Sciatic nerve (tissue), 2 donors: ENCODE measurements at regions of chr4 and their contacts with region 1.

Region 1: GRCh38 chr4:120049732-120050494 is 16.7 kb downstream of the MAD2L1 start:
- DNase-seq: peak; percentile 88
- ATAC-seq: peak; percentile 96

Region 2: DNA sequence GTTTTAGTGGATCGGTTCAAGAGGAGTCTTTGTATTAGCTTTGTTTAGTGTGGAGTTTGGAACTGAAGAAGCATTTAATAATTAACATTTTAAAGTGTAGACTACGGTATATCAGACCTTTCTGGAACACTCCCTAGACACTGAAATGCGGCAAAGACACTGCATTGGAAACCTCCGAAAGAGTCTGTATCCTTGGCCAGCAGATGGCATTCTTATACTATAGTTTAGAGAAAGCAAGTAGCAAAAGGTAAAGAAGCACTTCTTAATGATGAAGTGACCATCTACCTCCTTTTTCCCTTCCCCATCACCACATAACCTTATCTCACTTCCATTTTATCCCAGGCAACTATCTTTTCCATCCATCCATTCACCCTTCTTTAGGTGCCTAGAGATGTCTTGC is 735.6 kb before region 1 on chr4:
- intact Hi-C with region 1: loop called (anchors 10 kb)
- DNase-seq: no peak
- ATAC-seq: peak; percentile 77

Region 3: DNA sequence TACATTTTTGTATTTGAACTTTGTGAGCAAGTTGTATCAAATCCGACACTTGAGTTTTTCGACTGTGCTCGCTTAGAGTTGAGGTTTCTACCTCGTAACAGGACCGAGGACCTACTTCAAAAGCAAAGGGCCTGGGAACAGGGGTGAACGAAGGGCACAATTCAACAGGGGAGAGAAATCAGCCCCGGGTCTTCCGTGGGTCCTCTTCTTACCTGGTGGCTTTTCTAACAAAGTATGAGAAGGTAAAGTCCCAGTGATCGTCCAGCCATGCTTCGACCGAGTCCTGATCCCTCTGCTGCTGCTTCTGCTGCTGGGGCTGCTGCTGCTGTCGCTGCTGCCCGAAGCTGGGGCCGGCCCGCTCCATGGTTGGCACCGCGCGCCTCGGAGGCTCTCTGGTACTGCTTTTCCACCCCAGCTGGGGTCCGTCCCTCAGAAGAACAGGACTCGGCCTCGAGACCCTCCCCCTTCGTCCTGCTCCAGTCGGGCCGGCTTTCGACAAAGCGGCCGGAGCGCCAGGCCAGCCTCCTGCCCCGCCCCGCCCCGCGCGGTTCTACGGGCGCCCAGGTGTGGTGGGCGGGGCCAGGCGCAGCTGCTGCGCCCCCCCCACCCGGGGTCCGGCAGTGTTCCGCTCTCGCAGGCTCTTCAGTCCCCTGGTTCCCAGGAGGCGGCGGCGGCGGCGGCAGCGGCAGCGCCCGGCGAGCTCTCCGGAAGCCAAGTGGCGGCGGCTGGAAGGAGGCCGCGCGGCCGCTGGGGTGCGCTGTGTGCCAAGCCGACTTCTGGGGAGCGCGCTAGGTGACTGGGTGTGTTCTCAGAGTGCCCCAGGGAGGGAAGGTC is 421.4 kb before region 1 on chr4 and contains the start of gene PDE5A:
- intact Hi-C with region 1: loop called (anchors 5 kb)
- DNase-seq: peak; percentile 88
- ATAC-seq: peak; percentile 83
- total RNA-seq, gene PDE5A: 55.8 TPM